GM12878 (cell line): ENCODE measurements at regions of chr16 and their contacts with region 1.

Region 1: GRCh38 chr16:10314811-10315210 is 71.0 kb upstream of the ATF7IP2 start:
- DNase-seq: no peak
- ATAC-seq: peak; percentile 9; the same call in 1 of the 3 replicates
- H3K4me3 ChIP-seq: no peak overlapping the region
- H3K27ac ChIP-seq: no peak overlapping the region
- H3K4me1 ChIP-seq: peaks cover 13% of the 10 kb centered on the region
- H3K27me3 ChIP-seq: no peaks in the 10 kb centered on the region
- CTCF ChIP-seq: peak; percentile 9 to 52 (median 29); a peak in 4 of 6 replicates
- EP300 ChIP-seq: no peak
- POLR2A ChIP-seq: no peak
- RAD21 ChIP-seq: peak; percentile 63

Region 2: GRCh38 chr16:9817586-9817985 is 497.2 kb before region 1 on chr16:
- CTCF ChIA-PET with region 1: no interaction called
- POLR2A ChIA-PET with region 1: no interaction called
- RAD21 ChIA-PET with region 1: no interaction called
- SMC1A ChIA-PET with region 1: no interaction called
- in situ Hi-C with region 1: no loop called
- intact Hi-C with region 1: no loop called
- DNase-seq: no peak
- ATAC-seq: no peak
- H3K4me3 ChIP-seq: no peak overlapping the region
- H3K27ac ChIP-seq: no peak overlapping the region
- H3K4me1 ChIP-seq: no peaks in the 10 kb centered on the region
- H3K27me3 ChIP-seq: no peaks in the 10 kb centered on the region
- CTCF ChIP-seq: no peak
- EP300 ChIP-seq: no peak
- POLR2A ChIP-seq: no peak
- RAD21 ChIP-seq: no peak

Region 3: DNA sequence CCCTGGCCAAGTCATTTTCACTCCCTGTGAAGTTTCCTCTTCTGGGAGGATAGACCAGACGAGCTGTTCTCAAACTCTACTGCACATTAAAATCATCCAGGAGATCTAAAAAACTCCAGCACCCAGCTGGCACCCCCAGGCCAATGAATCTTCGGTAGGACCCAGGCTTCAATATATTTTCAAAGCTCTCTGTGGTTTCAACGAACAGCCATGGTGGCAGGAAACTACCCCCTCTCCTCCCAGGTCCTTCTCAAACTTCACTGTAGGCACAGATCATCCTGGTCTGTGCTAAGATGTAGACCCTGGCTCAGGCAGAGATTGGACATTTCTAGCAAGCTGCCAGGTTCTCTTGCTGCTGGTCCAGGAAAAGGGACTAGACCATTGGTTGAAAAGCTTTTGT is 93.9 kb before region 1 on chr16:
- CTCF ChIA-PET with region 1: no interaction called
- POLR2A ChIA-PET with region 1: no interaction called
- RAD21 ChIA-PET with region 1: no interaction called
- SMC1A ChIA-PET with region 1: no interaction called
- in situ Hi-C with region 1: no loop called
- intact Hi-C with region 1: no loop called
- DNase-seq: no peak
- ATAC-seq: no peak
- H3K4me3 ChIP-seq: no peak overlapping the region
- H3K27ac ChIP-seq: no peak overlapping the region
- H3K4me1 ChIP-seq: no peaks in the 10 kb centered on the region
- H3K27me3 ChIP-seq: no peaks in the 10 kb centered on the region
- CTCF ChIP-seq: no peak
- EP300 ChIP-seq: no peak
- POLR2A ChIP-seq: no peak
- RAD21 ChIP-seq: no peak

Region 4: GRCh38 chr16:10297341-10298006 is 17.3 kb before region 1 on chr16:
- CTCF ChIA-PET with region 1: interaction called, 23 read pairs
- POLR2A ChIA-PET with region 1: interaction called, 76 read pairs
- RAD21 ChIA-PET with region 1: interaction called, 143 read pairs
- SMC1A ChIA-PET with region 1: interaction called, 95 read pairs
- in situ Hi-C with region 1: no loop called
- intact Hi-C with region 1: loop called (anchors 1 kb)
- DNase-seq: peak; percentile 98
- ATAC-seq: peak; percentile 98
- H3K4me3 ChIP-seq: peak overlapping the region; percentile 50; the same call in 1 of the 2 replicates
- H3K27ac ChIP-seq: peak overlapping the region; percentile 99
- H3K4me1 ChIP-seq: peaks cover 31% of the 10 kb centered on the region
- H3K27me3 ChIP-seq: no peaks in the 10 kb centered on the region
- CTCF ChIP-seq: no peak
- EP300 ChIP-seq: peak; percentile 94 to 96; a peak in 3 of 4 replicates
- POLR2A ChIP-seq: peak; percentile 39; the same call in 1 of the 2 replicates
- RAD21 ChIP-seq: no peak

Region 5: DNA sequence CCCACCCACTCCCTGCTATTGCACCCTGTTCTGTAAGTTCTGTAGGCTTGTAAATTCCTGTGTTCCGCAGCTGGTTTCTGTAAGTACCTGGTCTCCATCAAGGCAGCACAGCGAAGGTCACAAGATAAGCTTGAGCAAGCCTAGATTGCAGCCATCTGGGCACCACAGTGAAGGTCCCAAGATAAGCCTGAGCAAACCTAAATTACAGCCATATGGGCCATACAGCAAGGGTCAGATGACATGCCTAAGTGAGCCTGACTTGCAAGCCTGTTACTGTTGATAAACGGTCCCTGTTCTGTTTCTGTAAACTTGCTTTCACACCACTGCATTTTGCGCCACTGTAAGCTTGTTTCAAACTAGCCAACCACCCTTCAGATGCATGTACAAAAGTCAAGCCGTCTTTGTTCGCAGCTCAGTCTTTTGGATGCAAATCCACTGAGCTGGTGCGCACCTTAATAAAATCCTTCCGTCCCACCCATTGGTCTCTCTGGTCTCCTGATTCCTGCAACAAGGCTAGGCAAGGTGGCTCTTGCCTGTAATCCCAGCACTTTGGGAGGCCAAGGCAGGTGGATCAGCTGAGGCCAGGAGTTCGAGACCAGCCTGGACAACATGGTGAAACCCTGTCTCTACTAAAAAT is 28.4 kb after region 1 on chr16:
- CTCF ChIA-PET with region 1: no interaction called
- POLR2A ChIA-PET with region 1: no interaction called
- RAD21 ChIA-PET with region 1: no interaction called
- SMC1A ChIA-PET with region 1: no interaction called
- in situ Hi-C with region 1: no loop called
- intact Hi-C with region 1: no loop called
- DNase-seq: no peak
- ATAC-seq: no peak
- H3K4me3 ChIP-seq: no peak overlapping the region
- H3K27ac ChIP-seq: no peak overlapping the region
- H3K4me1 ChIP-seq: no peaks in the 10 kb centered on the region
- H3K27me3 ChIP-seq: no peaks in the 10 kb centered on the region
- CTCF ChIP-seq: no peak
- EP300 ChIP-seq: no peak
- POLR2A ChIP-seq: no peak
- RAD21 ChIP-seq: no peak

Region 6: GRCh38 chr16:10370096-10370726 is 55.4 kb after region 1 on chr16:
- CTCF ChIA-PET with region 1: no interaction called
- POLR2A ChIA-PET with region 1: no interaction called
- RAD21 ChIA-PET with region 1: no interaction called
- SMC1A ChIA-PET with region 1: no interaction called
- in situ Hi-C with region 1: no loop called
- intact Hi-C with region 1: loop called (anchors 5 kb)
- DNase-seq: peak; percentile 19
- ATAC-seq: peak; percentile 79
- H3K4me3 ChIP-seq: no peak overlapping the region
- H3K27ac ChIP-seq: no peak overlapping the region
- H3K4me1 ChIP-seq: no peaks in the 10 kb centered on the region
- H3K27me3 ChIP-seq: no peaks in the 10 kb centered on the region
- CTCF ChIP-seq: no peak
- EP300 ChIP-seq: no peak
- POLR2A ChIP-seq: no peak
- RAD21 ChIP-seq: no peak

Region 7: DNA sequence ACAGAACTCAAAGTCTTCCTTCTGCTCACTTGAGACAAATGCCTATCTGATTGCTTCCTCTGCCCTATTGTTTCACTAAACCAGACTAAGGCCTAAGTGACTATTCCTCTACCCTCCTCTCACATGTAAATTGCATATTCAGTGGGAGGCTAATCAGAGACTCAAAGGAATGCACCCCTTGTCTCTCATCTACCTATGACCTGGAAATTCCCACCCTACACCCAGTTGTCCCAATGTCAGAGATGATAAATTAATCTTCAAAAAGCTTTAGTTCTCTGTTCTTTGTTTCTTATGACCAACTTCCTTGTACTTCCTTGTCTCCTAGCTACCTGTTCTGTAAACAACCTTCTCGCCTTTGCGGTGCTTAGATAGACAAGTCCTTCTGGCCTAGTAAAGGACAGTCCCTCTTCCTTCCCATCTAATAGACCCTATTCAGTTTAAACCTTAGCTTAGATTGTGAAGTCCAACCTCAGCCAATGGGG is 189.6 kb after region 1 on chr16:
- CTCF ChIA-PET with region 1: interaction called, 132 read pairs
- POLR2A ChIA-PET with region 1: interaction called, 9 read pairs
- RAD21 ChIA-PET with region 1: interaction called, 92 read pairs
- SMC1A ChIA-PET with region 1: interaction called, 118 read pairs
- in situ Hi-C with region 1: loop called (anchors 5 kb)
- intact Hi-C with region 1: loop called (anchors 1 kb)
- DNase-seq: no peak
- ATAC-seq: no peak; the same call in 2 of the 3 replicates
- H3K4me3 ChIP-seq: no peak overlapping the region
- H3K27ac ChIP-seq: no peak overlapping the region
- H3K4me1 ChIP-seq: no peaks in the 10 kb centered on the region; the same call in 1 of the 2 replicates
- H3K27me3 ChIP-seq: no peaks in the 10 kb centered on the region
- CTCF ChIP-seq: no peak
- EP300 ChIP-seq: no peak
- POLR2A ChIP-seq: no peak
- RAD21 ChIP-seq: no peak

Region 8: GRCh38 chr16:10743610-10744393 is 429.0 kb after region 1 on chr16 and contains the start of gene NUBP1:
- CTCF ChIA-PET with region 1: interaction called, 9 read pairs
- POLR2A ChIA-PET with region 1: no interaction called
- RAD21 ChIA-PET with region 1: interaction called, 3 read pairs
- SMC1A ChIA-PET with region 1: no interaction called
- in situ Hi-C with region 1: loop called (anchors 5 kb)
- intact Hi-C with region 1: loop called (anchors 5 kb)
- DNase-seq: peak; percentile 94
- ATAC-seq: peak; percentile 93
- H3K4me3 ChIP-seq: peak within 1 kb of the TSS; percentile 69
- H3K27ac ChIP-seq: peak within 1 kb of the TSS; percentile 74
- H3K4me1 ChIP-seq: peaks cover 39% of the 10 kb centered on the region
- H3K27me3 ChIP-seq: no peaks in the 10 kb centered on the region
- CTCF ChIP-seq: peak in 1 of 3 experiments; percentile 8; a peak in 1 of 6 replicates
- EP300 ChIP-seq: 0 out of 4 replicates have a peak, but pooled peaks of 1 of the 2 experiments have one; percentile 4
- POLR2A ChIP-seq: peak; percentile 96
- RAD21 ChIP-seq: no peak
- polyA plus RNA-seq, gene NUBP1: 31.0 to 36.3 TPM